ENCODE measurements at regions of chr5 and their contacts with region 1.

Region 1: DNA sequence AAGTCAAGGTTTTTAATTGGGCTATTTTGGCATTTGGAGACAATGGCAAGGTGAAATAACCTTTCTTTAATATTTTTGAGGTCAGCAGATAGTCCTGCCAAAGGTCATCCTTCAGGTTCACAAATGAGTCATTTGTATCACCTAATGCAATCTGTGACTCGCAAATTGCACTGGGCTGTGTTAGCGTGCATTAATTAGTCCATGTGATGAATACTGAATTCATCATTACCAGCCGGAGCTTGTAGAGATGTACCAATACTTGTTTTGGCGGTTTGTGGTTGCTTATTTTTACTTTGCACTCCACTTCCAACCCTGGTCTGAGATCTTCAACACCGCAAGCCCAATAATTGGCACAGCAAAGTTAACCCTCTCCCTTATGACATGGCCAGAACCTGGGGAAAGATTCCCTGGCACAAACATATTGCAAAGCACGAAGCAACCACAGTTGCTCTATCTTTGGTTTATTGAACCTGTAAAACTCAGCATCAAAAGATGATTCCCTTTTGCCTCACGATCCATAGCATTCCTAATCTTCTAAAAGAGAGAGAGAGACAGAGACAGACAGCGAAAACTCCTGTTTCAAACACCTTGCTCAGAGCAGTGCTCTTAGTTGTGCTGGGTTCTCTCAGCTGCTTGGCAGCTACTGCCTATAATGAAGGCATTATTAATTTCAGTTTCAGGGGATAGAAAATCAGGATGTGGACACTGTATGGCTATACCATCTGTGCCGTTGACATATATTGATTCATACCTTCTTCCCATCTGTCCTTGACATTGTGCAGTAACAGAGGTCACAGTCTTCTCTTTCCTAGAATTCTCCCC is 178.1 kb downstream of the EBF1 start:
- DNase-seq: peak; percentile 75
- ATAC-seq: peak; percentile 70
- H3K4me3 ChIP-seq: no peak overlapping the region
- H3K27ac ChIP-seq: peak overlapping the region; percentile 45
- H3K4me1 ChIP-seq: peaks cover 3% of the 10 kb centered on the region
- H3K27me3 ChIP-seq: no peaks in the 10 kb centered on the region
- CTCF ChIP-seq: no peak
- EP300 ChIP-seq: peak; percentile 91 to 98
- POLR2A ChIP-seq: no peak
- RAD21 ChIP-seq: no peak

Region 2: GRCh38 chr5:158880483-158881001 is 41.1 kb before region 1 on chr5:
- CTCF ChIA-PET with region 1: interaction called, 10 read pairs
- POLR2A ChIA-PET with region 1: interaction called, 20 read pairs
- RAD21 ChIA-PET with region 1: interaction called, 35 read pairs
- SMC1A ChIA-PET with region 1: interaction called, 41 read pairs
- in situ Hi-C with region 1: no loop called
- intact Hi-C with region 1: loop called (anchors 1 kb)
- DNase-seq: no peak
- ATAC-seq: peak; percentile 31
- H3K4me3 ChIP-seq: peak overlapping the region; percentile 24; the same call in 1 of the 2 replicates
- H3K27ac ChIP-seq: peak overlapping the region; percentile 83
- H3K4me1 ChIP-seq: peaks cover 66% of the 10 kb centered on the region
- H3K27me3 ChIP-seq: no peaks in the 10 kb centered on the region
- CTCF ChIP-seq: peak in 2 of 3 experiments; percentile 29 to 53; a peak in 3 of 6 replicates
- EP300 ChIP-seq: peak in 1 of 2 experiments; percentile 2; a peak in 1 of 4 replicates
- POLR2A ChIP-seq: no peak
- RAD21 ChIP-seq: peak; percentile 56

Region 3: GRCh38 chr5:158910782-158911692 is 10.6 kb before region 1 on chr5:
- CTCF ChIA-PET with region 1: interaction called, 9 read pairs
- POLR2A ChIA-PET with region 1: interaction called, 57 read pairs
- RAD21 ChIA-PET with region 1: interaction called, 48 read pairs
- SMC1A ChIA-PET with region 1: interaction called, 331 read pairs
- in situ Hi-C with region 1: no loop called
- intact Hi-C with region 1: loop called (anchors 1 kb)
- DNase-seq: no peak
- ATAC-seq: peak; percentile 88
- H3K4me3 ChIP-seq: no peak overlapping the region
- H3K27ac ChIP-seq: peak overlapping the region; percentile 50
- H3K4me1 ChIP-seq: peaks cover 32% of the 10 kb centered on the region
- H3K27me3 ChIP-seq: no peaks in the 10 kb centered on the region
- CTCF ChIP-seq: no peak
- EP300 ChIP-seq: peak; percentile 29 to 85; a peak in 2 of 4 replicates
- POLR2A ChIP-seq: no peak
- RAD21 ChIP-seq: no peak

Region 4: GRCh38 chr5:158943057-158943456 is 21.4 kb after region 1 on chr5:
- CTCF ChIA-PET with region 1: interaction called, 6 read pairs
- POLR2A ChIA-PET with region 1: interaction called, 5 read pairs
- RAD21 ChIA-PET with region 1: interaction called, 21 read pairs
- SMC1A ChIA-PET with region 1: interaction called, 13 read pairs
- in situ Hi-C with region 1: no loop called
- intact Hi-C with region 1: no loop called
- DNase-seq: no peak
- ATAC-seq: peak; percentile 74
- H3K4me3 ChIP-seq: no peak overlapping the region
- H3K27ac ChIP-seq: no peak overlapping the region
- H3K4me1 ChIP-seq: peaks cover 15% of the 10 kb centered on the region; the same call in 1 of the 2 replicates
- H3K27me3 ChIP-seq: no peaks in the 10 kb centered on the region
- CTCF ChIP-seq: no peak
- EP300 ChIP-seq: no peak
- POLR2A ChIP-seq: no peak
- RAD21 ChIP-seq: no peak

Region 5: DNA sequence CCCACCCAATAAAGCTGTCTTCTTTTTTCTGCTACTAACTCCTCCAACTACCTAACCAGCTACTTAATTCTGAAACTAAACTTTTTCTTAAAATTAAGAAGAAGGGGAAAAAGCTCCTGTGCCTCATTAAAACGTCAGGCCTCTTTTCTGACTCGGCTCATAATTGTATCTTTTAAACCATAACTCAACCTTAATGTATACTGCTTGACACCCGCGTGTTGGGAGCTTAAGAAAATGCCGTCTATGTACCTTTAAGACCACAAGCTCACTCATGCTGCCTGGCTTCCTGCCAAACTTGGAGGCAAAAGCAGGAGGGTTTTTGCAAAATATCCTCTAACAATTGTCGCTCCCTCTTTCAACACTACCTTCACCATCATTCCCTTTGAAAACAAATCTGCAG is 173.1 kb after region 1 on chr5:
- CTCF ChIA-PET with region 1: interaction called, 4 read pairs
- POLR2A ChIA-PET with region 1: interaction called, 6 read pairs
- RAD21 ChIA-PET with region 1: interaction called, 32 read pairs
- SMC1A ChIA-PET with region 1: interaction called, 14 read pairs
- in situ Hi-C with region 1: no loop called
- intact Hi-C with region 1: no loop called
- DNase-seq: no peak
- ATAC-seq: peak; percentile 35
- H3K4me3 ChIP-seq: peak overlapping the region; percentile 88
- H3K27ac ChIP-seq: peak overlapping the region; percentile 68
- H3K4me1 ChIP-seq: peaks cover 5% of the 10 kb centered on the region; the same call in 1 of the 2 replicates
- H3K27me3 ChIP-seq: no peaks in the 10 kb centered on the region
- CTCF ChIP-seq: no peak
- EP300 ChIP-seq: no peak
- POLR2A ChIP-seq: no peak
- RAD21 ChIP-seq: no peak